Calu3 (cell line): ENCODE measurements at regions of chr21 and their contacts with region 1.

Region 1: GRCh38 chr21:41612674-41613532 is 104.9 kb upstream of the TMPRSS2 start:
- DNase-seq: peak; percentile 72
- H3K4me3 Mint-ChIP-seq: no peak overlapping the region
- H3K27ac Mint-ChIP-seq: no peak overlapping the region
- H3K4me1 Mint-ChIP-seq: peaks cover 18% of the 10 kb centered on the region
- H3K27me3 Mint-ChIP-seq: no peaks in the 10 kb centered on the region
- CTCF ChIP-seq: peak; percentile 76

Region 2: DNA sequence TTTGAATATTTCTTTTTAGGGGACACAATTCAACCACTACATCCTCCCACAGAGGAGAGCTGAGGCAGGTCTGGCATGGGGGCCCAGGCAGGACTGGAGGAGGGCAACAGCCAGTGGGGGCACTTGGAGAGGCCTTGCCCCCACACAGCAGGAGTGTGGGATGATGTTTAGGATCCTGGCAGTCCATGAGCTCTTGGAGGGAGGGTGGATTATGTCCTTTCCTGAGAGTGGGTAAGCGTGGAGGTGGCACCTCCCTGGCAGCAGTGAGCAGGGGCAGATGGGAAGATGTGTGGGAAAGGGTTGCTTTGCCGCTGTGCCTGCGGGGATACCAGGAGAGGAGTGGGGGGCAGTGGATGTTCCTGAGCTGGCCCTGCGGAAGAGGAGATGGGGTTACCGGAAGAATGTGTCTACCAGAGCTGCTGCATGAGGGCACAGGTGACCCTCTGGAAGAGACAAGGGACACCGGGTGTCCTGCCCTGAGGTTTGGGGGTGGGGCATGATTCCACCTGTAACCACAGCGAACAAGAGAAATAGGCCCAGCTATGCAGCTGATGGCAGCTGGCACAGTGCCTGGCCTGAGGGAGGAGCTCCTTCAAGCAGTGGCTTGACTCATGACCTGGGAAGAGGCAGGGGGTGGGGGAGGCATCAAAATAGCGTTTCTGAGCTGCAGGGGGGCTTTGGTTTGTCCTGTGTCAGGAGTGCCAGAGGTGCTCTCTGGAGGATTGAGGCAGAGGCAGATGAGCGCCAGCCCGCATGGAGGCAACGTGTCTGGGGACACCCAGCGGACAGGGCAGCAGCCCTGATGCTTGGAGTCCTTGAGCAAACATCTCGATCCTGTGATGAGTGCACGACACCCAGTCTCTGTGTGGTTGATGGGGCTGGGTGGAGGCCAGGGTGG is 18.9 kb after region 1 on chr21:
- CTCF ChIA-PET with region 1: interaction called, 13 read pairs
- intact Hi-C with region 1: no loop called
- DNase-seq: peak; percentile 82
- H3K4me3 Mint-ChIP-seq: peak overlapping the region; percentile 36
- H3K27ac Mint-ChIP-seq: peak overlapping the region; percentile 78
- H3K4me1 Mint-ChIP-seq: peaks cover 45% of the 10 kb centered on the region
- H3K27me3 Mint-ChIP-seq: no peaks in the 10 kb centered on the region
- CTCF ChIP-seq: no peak

Region 3: DNA sequence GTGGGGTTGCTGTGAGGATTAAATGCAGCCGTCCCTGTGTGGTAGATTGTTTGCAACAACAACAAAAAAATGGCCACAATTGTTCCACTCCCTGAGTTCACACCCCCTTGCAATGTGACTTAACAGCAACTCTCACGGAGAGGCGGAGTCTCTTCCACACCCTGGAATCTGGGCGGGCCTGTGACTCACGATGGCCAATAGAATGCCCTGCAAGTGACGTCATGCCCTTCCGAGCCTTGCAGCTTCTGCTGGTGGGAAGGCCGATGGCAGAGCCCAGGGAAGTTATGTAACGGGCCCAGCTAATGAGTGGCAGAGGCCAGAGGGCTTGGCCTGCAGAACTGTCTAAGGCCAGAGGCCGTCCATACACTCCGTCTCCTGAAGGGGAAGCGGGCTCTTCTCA is 66.0 kb after region 1 on chr21:
- CTCF ChIA-PET with region 1: interaction called, 23 read pairs
- intact Hi-C with region 1: no loop called
- DNase-seq: peak; percentile 94
- H3K4me3 Mint-ChIP-seq: peak overlapping the region; percentile 50
- H3K27ac Mint-ChIP-seq: peak overlapping the region; percentile 85
- H3K4me1 Mint-ChIP-seq: peaks cover 54% of the 10 kb centered on the region
- H3K27me3 Mint-ChIP-seq: no peaks in the 10 kb centered on the region
- CTCF ChIP-seq: no peak

Region 4: DNA sequence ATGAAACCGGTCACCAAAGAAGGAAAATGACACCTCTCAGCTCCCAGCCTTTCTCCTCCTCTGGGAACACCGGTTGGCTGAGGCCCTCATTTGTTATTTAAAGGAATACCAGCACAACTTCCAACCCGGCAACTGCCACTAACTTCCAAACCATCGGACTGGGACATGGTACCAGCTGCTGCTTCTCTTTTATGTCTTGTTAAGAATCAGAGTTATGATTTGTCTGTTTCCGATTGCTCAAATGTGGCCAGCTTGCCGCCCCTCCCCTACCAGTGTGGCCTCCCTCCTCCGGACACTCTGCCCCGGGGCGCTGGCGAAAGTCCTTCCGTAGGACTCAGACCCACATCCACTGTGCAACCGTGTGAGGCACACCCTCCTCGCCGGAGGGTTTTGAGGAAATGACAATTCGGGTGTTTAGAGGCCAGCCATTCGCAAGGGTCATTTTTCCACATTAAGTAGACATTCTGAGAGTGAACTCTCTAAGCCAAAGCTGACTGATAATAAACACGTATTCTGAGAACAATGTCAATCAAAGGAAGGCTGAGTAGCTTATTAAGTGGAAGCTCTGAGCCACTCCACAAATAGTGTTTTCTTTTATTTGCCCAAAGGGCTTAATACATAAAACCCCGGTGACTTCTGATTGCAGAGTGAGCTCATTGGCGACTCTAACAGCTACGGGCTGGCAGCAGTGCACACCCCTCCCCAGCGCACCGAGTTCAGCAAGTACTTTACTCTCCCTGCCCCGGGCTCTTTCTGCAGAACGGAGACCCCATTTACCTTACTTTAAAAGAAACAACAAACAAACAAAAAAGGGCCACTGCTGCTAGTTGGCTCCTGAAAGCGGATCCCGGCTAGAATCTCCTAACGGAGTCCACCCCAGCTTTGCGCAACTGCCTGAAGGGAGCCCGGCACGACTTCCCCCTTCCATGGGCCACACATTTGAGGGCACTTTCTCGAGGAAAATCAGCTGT is 148.6 kb after region 1 on chr21:
- CTCF ChIA-PET with region 1: interaction called, 11 read pairs
- intact Hi-C with region 1: no loop called
- DNase-seq: peak; percentile 48
- H3K4me3 Mint-ChIP-seq: peak overlapping the region; percentile 76
- H3K27ac Mint-ChIP-seq: peak overlapping the region; percentile 91
- H3K4me1 Mint-ChIP-seq: peaks cover 51% of the 10 kb centered on the region
- H3K27me3 Mint-ChIP-seq: no peaks in the 10 kb centered on the region
- CTCF ChIP-seq: no peak

Region 5: DNA sequence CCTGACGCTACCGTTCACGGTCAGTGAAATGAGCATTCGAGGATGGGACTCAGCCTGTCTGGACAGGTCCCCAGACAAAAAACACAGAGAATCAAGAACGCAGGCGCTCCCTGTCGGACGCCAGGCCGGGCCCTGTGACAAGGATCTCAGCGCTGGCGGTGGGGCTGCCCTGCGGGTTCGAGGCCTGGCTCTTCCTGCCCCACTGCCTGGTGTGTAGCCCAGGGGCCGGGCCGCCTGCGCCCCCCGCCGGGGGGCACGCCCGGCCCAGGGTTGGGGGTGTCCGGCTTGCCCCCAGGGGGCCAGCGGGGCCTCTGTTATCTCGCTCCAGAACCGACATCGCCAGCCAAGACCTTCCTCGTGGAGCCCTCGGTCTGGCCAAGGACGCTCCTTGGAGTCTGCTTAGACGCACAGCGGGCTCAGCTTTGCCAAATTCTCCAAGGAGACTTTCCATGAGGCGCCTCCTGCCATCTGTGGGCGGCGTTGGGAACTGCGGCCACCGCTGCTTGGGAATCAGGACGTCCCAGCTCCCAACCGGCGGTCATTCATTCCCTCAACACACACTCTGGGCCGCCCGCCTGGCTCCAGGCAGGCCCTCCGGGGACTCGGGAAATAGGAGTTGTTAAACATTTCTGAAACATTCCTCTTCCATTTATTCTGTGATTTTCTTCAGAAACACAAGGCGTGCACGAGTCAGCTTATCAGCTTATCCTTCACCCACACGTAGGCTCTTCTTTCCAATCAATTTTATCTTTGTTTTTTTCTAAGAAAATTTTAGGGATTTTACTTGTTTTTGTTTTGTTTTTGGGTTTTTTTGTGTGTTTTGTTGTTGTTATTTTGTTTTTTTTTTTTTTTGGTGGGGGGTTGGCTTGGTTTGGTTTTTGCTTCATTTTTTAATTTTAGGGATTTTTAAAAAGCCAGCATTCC is 165.3 kb after region 1 on chr21:
- CTCF ChIA-PET with region 1: interaction called, 22 read pairs
- intact Hi-C with region 1: loop called (anchors 1 kb)
- DNase-seq: peak; percentile 86
- H3K4me3 Mint-ChIP-seq: no peak overlapping the region
- H3K27ac Mint-ChIP-seq: peak overlapping the region; percentile 23
- H3K4me1 Mint-ChIP-seq: peaks cover 29% of the 10 kb centered on the region
- H3K27me3 Mint-ChIP-seq: no peaks in the 10 kb centered on the region
- CTCF ChIP-seq: peak; percentile 77

Region 6: GRCh38 chr21:41816220-41817165 is 203.6 kb after region 1 on chr21:
- CTCF ChIA-PET with region 1: interaction called, 13 read pairs
- intact Hi-C with region 1: no loop called
- DNase-seq: peak; percentile 20
- H3K4me3 Mint-ChIP-seq: no peak overlapping the region
- H3K27ac Mint-ChIP-seq: no peak overlapping the region
- H3K4me1 Mint-ChIP-seq: no peaks in the 10 kb centered on the region
- H3K27me3 Mint-ChIP-seq: no peaks in the 10 kb centered on the region
- CTCF ChIP-seq: peak; percentile 25